ENCODE measurements at regions of chr10 and their contacts with region 1.

Region 1: GRCh38 chr10:75294866-75295701 is 59.3 kb upstream of the COMTD1 start:
- DNase-seq: peak; percentile 52
- H3K4me3 Mint-ChIP-seq: peak overlapping the region; percentile 69
- H3K27ac Mint-ChIP-seq: no peak overlapping the region
- H3K4me1 Mint-ChIP-seq: no peaks in the 10 kb centered on the region
- H3K27me3 Mint-ChIP-seq: peaks cover 22% of the 10 kb centered on the region

Region 2: DNA sequence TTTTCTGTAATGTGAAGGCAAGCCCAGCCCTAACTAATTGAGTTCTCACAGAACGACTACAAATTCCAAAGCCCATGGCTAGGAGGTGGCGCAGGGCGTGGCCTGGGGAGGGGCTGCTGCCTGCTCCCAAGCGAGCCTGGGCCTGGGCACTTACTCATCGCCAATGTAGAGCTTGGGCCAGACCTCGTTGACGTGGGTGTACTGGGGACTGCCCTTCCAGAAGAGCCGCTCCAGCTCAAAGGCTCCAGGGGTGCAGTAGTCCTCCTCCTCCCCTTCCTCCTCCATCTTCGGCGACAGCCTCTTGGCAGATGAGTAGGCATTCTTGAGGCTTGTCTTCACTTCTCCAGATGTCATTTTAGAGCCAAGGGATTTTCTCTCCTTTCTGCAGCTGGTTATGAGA is 236.9 kb before region 1 on chr10:
- intact Hi-C with region 1: no loop called
- DNase-seq: no peak
- H3K4me3 Mint-ChIP-seq: no peak overlapping the region
- H3K27ac Mint-ChIP-seq: no peak overlapping the region
- H3K4me1 Mint-ChIP-seq: peaks cover 9% of the 10 kb centered on the region
- H3K27me3 Mint-ChIP-seq: no peaks in the 10 kb centered on the region

Region 3: DNA sequence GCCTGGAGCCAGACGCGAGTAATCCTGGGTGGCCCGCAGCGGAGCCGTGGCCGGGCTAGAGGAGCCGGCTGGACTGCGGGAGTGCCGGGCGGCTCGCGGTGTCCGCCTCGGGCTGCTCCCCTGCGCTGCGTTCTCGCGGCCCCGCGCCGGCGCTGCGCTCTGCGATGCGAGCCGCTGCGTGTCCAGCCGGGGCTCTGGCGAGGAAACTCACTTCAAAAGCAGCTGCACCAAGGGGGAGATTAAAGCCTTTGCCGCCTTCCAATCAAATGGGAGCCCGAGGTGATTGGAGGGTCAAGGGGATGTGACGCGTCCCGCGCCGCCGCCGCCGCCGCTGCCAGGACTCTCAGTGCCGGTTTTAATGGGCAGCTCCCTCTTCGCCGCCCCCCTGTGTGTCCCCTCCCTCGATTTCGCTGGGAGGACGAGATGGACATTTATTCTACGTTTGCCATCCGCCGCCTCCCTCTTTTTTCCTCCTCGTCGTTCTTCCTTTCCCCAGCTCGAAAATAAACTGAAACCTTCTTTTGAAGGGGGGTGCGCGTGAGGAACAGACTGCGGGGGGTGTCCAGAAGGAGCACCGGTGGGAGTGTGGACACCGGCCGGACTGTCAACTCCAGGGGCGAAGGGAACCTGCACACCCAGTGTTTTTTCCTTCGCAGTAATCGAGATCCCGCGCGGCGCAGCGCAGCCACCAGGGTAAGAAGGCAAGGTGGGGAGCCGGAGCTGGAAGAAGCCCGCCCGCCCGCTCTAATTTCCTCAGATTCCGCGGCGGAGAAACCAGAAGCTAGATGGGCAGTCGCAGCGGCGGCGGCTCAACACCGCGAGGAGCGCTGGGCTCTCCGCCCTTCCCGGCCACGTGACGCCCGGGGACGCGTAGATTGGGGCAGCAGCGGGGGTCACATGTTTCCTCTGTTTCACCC is 106.7 kb after region 1 on chr10 and contains the start of gene ZNF503:
- intact Hi-C with region 1: loop called (anchors 5 kb)
- DNase-seq: no peak
- H3K4me3 Mint-ChIP-seq: peak within 1 kb of the TSS; percentile 79
- H3K27ac Mint-ChIP-seq: peak within 1 kb of the TSS; percentile 64
- H3K4me1 Mint-ChIP-seq: peaks cover 29% of the 10 kb centered on the region
- H3K27me3 Mint-ChIP-seq: peaks cover 64% of the 10 kb centered on the region
- total RNA-seq, gene ZNF503: 0.07 TPM in 1 of 2 replicates, not detected in the other